MCF 10A (cell line): ENCODE measurements at regions of chr2 and their contacts with region 1.

Region 1: DNA sequence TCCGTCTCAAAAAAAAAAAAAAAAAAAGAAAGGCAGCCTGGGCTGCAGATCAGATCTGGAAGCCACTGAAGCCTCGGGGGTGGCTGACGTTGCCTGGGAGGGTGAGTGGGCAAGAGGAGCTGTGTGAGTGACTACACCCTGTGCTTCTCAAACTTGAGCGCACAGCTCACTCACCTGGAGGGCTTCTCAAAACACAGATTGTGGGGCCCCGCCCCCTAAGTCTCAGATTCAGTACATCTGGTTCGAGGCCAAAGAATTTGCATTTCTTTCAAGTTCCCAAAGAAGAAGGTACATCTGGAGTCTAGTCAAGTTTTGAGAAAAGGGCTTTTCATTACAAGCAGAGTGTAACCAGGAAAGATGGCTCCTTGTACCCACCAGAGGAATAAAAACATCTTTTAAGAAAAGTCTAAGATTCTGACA is 97.7 kb upstream of the CAB39 start:
- DNase-seq: peak; percentile 58
- H3K4me3 Mint-ChIP-seq: no peak overlapping the region
- H3K27ac Mint-ChIP-seq: no peak overlapping the region
- H3K4me1 Mint-ChIP-seq: peaks cover 7% of the 10 kb centered on the region
- H3K27me3 Mint-ChIP-seq: no peaks in the 10 kb centered on the region
- CTCF ChIP-seq: no peak

Region 2: DNA sequence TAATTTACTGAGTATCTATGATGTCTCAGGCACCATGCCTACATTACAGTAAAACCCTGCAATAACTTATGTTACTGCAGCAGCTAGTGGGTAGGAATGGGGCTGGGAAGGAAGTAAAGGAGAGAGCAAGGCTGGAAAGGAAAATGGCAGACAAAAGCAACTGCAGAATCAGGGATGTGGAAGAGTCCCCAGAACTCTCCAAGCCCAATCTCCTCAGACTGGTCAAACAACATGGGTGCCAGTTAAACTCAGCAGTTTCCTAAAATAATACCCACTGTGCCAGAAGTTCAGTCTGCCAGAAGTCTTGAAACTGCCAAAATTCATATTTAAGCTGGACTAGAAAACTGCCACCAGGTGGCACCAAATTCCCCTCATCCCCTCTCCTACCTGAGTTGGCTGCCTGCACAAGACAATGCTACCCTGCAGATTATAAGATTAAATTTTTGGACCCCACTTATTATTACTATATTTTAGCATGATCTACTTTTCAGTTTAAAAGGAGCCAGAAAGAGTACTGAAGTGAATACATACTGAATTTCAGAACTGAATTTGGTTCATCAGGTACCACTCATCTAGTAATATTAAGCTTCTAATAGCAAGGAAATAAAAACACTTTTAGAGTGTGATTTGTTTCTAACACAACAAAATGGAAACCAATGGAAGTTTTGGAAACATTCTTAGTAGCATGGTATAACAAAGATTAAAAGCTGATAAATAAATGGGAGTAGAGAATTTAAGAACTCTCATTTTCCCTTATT is 813.7 kb before region 1 on chr2:
- CTCF ChIA-PET with region 1: interaction called, 3 read pairs
- POLR2A ChIA-PET with region 1: no interaction called
- intact Hi-C with region 1: loop called (anchors 5 kb)
- DNase-seq: peak; percentile 79
- H3K4me3 Mint-ChIP-seq: no peak overlapping the region
- H3K27ac Mint-ChIP-seq: no peak overlapping the region
- H3K4me1 Mint-ChIP-seq: peaks cover 9% of the 10 kb centered on the region
- H3K27me3 Mint-ChIP-seq: no peaks in the 10 kb centered on the region
- CTCF ChIP-seq: peak; percentile 65

Region 3: DNA sequence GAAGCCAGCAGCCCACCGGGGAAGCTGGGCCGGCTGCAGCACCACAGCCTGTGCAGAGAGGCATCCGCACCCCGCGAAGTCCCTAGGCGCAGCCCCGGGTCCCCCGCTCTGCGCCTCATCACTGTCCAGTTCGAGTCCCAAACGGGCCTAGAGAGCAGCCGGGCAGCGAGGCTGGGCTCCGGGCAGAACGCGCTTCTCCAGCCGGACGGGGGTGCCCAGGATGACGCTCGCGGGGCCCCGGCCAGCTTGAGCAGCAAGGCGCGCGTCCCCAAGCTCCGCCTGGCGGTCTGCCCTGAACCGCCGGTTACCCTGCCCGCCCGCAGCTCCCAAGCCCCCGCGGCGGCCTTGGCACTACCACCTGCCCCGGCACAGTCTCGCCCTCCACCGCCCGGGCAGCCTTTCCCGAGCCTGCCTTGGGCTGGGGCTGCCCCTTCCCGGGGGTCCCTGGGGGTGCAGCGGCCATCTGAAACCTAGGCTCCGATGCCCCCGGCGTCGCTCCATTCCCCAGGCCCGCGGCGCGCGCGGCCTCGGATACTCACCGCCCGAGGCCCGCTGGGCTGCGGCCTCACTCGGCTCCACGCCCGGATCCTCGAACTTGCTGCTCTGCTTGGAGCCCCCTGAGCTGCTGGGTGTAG is 546.8 kb before region 1 on chr2:
- CTCF ChIA-PET with region 1: interaction called, 3 read pairs
- POLR2A ChIA-PET with region 1: interaction called, 4 read pairs
- intact Hi-C with region 1: loop called (anchors 1 kb)
- DNase-seq: peak; percentile 45
- H3K4me3 Mint-ChIP-seq: peak overlapping the region; percentile 72
- H3K27ac Mint-ChIP-seq: no peak overlapping the region
- H3K4me1 Mint-ChIP-seq: peaks cover 9% of the 10 kb centered on the region
- H3K27me3 Mint-ChIP-seq: no peaks in the 10 kb centered on the region
- CTCF ChIP-seq: peak; percentile 21

Region 4: GRCh38 chr2:230416061-230416721 is 198.7 kb before region 1 on chr2 and contains the start of gene SP100:
- CTCF ChIA-PET with region 1: interaction called, 3 read pairs
- POLR2A ChIA-PET with region 1: no interaction called
- intact Hi-C with region 1: loop called (anchors 5 kb)
- DNase-seq: peak; percentile 86
- H3K4me3 Mint-ChIP-seq: peak within 1 kb of the TSS; percentile 89
- H3K27ac Mint-ChIP-seq: peak within 1 kb of the TSS; percentile 98
- H3K4me1 Mint-ChIP-seq: peaks cover 46% of the 10 kb centered on the region
- H3K27me3 Mint-ChIP-seq: no peaks in the 10 kb centered on the region
- CTCF ChIP-seq: no peak
- total RNA-seq, gene SP100: 54.5 and 56.9 TPM in 2 replicates

Region 5: GRCh38 chr2:230798769-230799399 is 184.0 kb after region 1 on chr2:
- CTCF ChIA-PET with region 1: interaction called, 6 read pairs
- POLR2A ChIA-PET with region 1: interaction called, 4 read pairs
- intact Hi-C with region 1: loop called (anchors 1 kb)
- DNase-seq: peak; percentile 85
- H3K4me3 Mint-ChIP-seq: no peak overlapping the region
- H3K27ac Mint-ChIP-seq: no peak overlapping the region
- H3K4me1 Mint-ChIP-seq: peaks cover 9% of the 10 kb centered on the region
- H3K27me3 Mint-ChIP-seq: no peaks in the 10 kb centered on the region
- CTCF ChIP-seq: peak; percentile 75